Panc1 (cell line): ENCODE measurements at regions of chr1 and their contacts with region 1.

Region 1: DNA sequence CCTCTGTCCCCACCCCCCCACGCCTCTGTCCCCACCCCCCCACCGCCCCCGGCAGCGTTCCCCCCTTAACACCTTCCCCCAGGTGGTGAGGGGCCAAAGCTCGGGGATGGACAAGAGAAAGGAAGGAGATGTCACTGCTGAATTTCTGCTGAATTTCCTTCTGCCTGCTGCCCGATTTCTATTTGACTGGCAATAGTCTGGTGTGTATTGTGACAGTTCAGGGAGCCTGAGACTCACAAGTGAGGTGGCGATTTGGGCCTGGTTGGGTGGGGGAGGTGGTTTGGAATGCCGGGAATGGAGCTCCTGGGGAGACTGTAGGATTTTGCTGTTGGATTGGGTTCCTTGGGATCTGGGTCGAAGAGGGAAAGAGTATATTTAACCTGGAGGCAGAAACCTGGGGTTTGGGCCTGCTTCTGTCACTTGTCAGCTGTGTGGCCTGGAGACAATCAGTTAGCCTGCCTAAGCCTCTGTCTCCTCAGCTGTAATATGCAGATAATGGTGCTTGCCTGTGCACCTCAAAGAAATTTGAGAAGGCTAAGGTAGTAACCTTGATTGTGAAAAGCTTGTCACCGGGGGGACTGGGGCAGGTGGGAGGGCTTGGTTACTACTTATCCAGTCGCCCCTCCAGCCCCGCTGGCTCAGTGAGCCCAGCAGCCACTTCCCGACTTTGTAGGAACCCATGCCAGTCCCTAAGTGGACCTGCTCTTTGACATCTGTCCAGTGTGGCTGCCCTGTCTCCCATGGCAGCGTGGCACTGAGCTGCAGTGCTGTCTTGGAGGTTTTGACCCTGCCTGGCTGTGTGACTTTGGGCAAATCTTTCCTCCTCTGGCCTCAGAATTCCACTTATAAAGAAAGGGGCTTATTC is 7.7 kb upstream of the LMNA start:
- DNase-seq: no peak
- ATAC-seq: peak; percentile 24
- H3K4me3 ChIP-seq: peak overlapping the region in 1 of 2 experiments; percentile 44; a peak in 2 of 4 replicates
- H3K27ac ChIP-seq: peak overlapping the region; percentile 74
- H3K4me1 ChIP-seq: peaks cover 49% of the 10 kb centered on the region
- H3K27me3 ChIP-seq: no peaks in the 10 kb centered on the region
- CTCF ChIP-seq: no peak

Region 2: DNA sequence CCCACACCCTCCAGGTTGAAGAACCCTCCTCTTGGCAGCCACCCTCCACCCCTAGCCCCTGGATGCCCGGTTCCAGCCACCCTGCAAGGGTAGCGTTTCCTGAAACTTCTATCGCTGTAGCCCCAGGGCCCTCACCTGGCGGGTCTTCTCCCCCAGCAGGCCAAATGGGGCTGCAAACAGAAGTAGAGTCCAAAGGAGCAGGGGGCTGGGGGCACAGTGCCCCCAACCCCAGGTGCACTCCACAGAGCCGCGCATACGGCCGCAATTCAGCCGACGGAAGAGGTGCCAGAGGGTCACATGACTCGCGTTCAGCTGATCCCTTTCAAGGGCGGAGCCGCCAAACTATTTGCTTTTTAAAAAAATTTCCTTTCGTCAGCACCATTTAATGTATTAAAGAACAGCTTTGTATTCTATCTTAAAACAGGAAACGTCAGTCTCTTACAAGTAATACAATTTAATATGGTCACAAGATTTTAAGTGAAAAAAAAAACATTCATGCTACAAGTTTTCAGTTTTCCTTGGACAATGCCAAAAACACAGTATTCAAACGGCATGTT is 188.6 kb after region 1 on chr1 and contains the start of gene GLMP:
- CTCF ChIA-PET with region 1: no interaction called
- POLR2A ChIA-PET with region 1: interaction called, 13 read pairs
- in situ Hi-C with region 1: no loop called
- intact Hi-C with region 1: no loop called
- DNase-seq: no peak
- ATAC-seq: 0 out of 2 replicates have a peak, but pooled peaks have one; percentile 23
- H3K4me3 ChIP-seq: peak within 1 kb of the TSS; percentile 57 to 86
- H3K27ac ChIP-seq: peak within 1 kb of the TSS; percentile 87
- H3K4me1 ChIP-seq: peaks cover 18% of the 10 kb centered on the region
- H3K27me3 ChIP-seq: no peaks in the 10 kb centered on the region
- CTCF ChIP-seq: no peak
- total RNA-seq, gene GLMP: 60.2 TPM